GM18951 (cell line): ENCODE measurements at regions of chr2 and their contacts with region 1.

Region 1: GRCh38 chr2:179017773-179018357 is 32.1 kb downstream of the CCDC141 start:
- POLR2A ChIP-seq: no peak

Region 2: DNA sequence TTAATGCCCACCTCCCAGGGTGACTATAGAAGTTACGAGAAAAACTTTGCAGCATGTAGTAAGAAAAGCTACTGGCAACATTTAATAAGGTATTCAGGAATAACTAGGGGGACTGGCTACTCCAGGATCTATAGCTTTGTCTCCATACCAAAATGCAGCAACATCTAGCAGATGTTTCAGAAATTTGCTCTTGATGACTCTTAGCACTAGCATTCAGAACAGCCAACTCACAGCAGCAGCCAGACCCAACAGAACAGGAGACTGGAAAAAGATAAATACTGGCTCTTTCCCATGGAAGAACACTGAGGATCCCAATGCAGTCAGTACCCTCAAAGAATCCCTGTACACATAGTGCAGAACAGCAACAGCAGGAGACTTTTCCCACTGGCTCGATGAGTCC is 671.9 kb before region 1 on chr2:
- in situ Hi-C with region 1: no loop called
- POLR2A ChIP-seq: no peak

Region 3: DNA sequence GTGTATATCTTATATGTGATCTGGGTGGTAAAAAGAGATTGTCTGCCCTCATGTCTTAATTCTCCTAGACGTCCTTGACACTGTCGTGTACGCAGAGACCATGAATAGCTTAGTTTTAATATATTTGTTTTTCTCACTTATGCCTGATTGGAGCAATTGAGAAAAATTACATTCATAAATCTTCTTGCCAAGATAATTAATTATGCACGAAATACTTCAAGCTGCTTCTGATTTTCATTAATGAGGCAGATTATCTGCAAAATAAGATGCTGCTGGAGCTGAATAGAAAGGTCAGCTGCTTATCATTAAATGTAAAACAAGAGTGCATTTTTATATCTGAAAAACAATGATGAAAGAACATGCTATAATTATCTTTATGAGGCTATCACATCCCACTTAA is 63.8 kb before region 1 on chr2:
- in situ Hi-C with region 1: loop called (anchors 10 kb)
- POLR2A ChIP-seq: no peak